Head of caudate nucleus (tissue), 42 donors: ENCODE measurements at regions of chr2 and their contacts with region 1.

Region 1: DNA sequence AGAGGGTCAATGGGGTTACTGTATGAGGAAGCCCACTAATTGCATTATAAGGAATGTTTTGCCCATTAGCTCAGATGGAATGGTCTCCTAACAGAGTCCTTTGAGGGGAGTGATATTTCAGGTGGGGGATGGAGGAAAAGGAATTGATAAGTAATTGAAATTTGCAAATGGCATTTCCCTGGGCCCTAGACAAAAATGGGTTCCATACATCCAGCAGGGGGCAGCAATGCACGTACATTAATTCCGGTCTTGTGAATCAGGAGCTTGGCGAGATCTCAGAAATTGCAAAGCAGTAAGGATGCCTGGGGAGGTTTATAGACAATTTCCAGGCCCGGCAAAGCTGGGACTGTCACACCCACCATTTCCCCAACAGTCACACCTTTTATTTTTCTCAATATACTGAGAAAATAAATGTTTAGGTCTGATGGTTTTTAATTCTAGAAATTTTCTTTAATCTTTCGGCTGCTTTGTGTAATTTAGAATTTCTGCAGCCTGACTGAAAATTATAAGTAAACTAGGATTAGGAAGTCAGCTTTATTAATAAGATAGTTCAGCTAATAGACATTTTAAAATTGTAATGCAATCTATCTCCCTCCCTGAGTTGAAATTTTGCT is 122.8 kb downstream of the LYPD1 start:
- DNase-seq: peak; percentile 55 to 95 (median 84)

Region 2: GRCh38 chr2:133171393-133172004 is 624.3 kb after region 1 on chr2:
- intact Hi-C with region 1: loop called (anchors 5 kb)
- DNase-seq: peak in 10 of 42 donors; percentile 12 to 67 (median 32)

Region 3: GRCh38 chr2:133561045-133561852 is 1014.1 kb after region 1 on chr2:
- intact Hi-C with region 1: loop called (anchors 10 kb)
- DNase-seq: peak in 17 of 42 donors; percentile 7 to 72 (median 44)

Region 4: GRCh38 chr2:133837441-133838094 is 1290.4 kb after region 1 on chr2:
- intact Hi-C with region 1: loop called (anchors 10 kb)
- DNase-seq: peak in 4 of 42 donors; percentile 13 to 44 (median 30)